BJ (cell line): ENCODE measurements at regions of chr3 and their contacts with region 1.

Region 1: GRCh38 chr3:137032465-137033120 is 74.8 kb downstream of the IL20RB start:
- DNase-seq: no peak
- H3K4me3 ChIP-seq: 0 out of 2 replicates have a peak overlapping the region, but pooled peaks have one; percentile 17
- H3K27me3 ChIP-seq: peaks cover 1% of the 10 kb centered on the region; the same call in 1 of the 2 replicates
- CTCF ChIP-seq: peak; percentile 99

Region 2: GRCh38 chr3:137020315-137020714 is 12.3 kb before region 1 on chr3:
- CTCF ChIA-PET with region 1: interaction called, 45 read pairs
- POLR2A ChIA-PET with region 1: no interaction called
- DNase-seq: no peak
- H3K4me3 ChIP-seq: no peak overlapping the region
- H3K27me3 ChIP-seq: no peaks in the 10 kb centered on the region
- CTCF ChIP-seq: no peak

Region 3: DNA sequence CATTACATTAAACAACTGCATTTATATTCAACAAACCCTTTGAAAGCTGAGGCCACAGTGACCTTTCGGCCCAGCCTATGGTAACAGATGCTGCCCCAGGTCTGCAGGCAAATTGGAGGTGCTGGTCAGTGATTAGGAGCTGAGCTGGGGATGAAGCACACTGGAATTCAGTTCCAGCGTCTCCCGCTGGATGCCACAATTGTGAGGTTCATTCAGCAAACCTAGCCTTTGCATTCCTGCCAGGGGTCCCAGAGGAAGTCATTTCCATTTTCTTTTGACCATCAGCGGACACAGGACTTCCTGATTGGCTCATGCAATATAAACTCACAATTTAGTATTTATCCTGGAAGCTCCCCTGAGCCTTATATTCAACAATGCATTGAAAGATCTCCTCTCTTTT is 14.6 kb after region 1 on chr3:
- CTCF ChIA-PET with region 1: interaction called, 16 read pairs
- POLR2A ChIA-PET with region 1: no interaction called
- DNase-seq: no peak
- H3K4me3 ChIP-seq: no peak overlapping the region
- H3K27me3 ChIP-seq: peaks cover 6% of the 10 kb centered on the region
- CTCF ChIP-seq: no peak

Region 4: GRCh38 chr3:137065381-137065780 is 32.8 kb after region 1 on chr3:
- CTCF ChIA-PET with region 1: no interaction called
- POLR2A ChIA-PET with region 1: no interaction called
- DNase-seq: no peak
- H3K4me3 ChIP-seq: no peak overlapping the region
- H3K27me3 ChIP-seq: peaks cover 4% of the 10 kb centered on the region
- CTCF ChIP-seq: no peak